A673 (cell line): ENCODE measurements at regions of chr3 and their contacts with region 1.

Region 1: DNA sequence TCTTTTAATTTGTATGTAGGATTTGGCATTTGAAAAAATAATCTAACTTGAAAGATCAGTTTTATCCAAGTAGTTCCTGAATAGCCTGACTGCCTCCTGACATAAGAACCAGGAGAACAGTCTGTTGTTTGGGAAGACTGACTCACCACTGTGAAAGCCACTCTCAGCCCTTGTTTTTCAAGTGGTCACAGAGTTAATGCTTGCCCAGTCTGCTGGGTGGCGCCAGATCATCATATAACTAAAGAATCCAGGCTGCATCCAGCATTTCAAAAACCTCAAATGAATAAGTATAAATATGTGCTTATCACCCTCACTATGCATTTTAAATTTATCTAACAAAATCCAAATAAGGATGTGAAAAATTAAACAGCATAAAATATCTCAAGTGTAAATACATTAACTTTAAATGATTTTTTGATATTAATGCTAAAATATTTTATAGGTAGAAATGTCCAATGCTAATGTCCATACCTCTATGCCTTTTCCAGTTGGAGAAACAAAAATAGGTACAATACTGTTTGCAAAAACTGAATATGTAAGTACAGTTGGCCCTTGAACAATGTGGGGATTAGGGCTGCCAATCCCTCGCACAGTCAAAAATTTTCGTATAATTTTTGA is 26.9 kb upstream of the ZBBX start:
- DNase-seq: peak; percentile 64
- H3K4me3 ChIP-seq: no peak overlapping the region
- H3K27ac ChIP-seq: no peak overlapping the region
- H3K4me1 ChIP-seq: no peaks in the 10 kb centered on the region
- H3K27me3 ChIP-seq: no peaks in the 10 kb centered on the region
- CTCF ChIP-seq: peak; percentile 65

Region 2: DNA sequence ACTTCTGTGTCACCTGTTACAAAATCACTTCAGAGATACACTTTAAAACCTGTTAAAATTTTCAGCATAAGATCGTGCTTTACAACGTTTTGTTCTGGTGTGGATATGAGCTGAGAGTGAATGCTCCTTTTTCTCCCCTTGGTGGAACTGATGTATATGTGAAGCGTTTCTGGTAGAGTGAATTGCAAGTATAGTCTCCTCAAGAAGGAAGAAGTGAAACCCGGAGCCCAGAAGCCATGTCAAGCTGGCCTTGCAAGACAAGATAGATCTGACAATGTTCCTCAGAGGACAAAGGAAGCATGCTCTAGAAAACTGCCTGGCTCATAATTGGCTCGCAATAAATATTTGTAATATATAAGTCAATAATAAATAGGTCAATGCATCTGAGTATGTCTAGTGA is 43.2 kb after region 1 on chr3:
- CTCF ChIA-PET with region 1: no interaction called
- POLR2A ChIA-PET with region 1: no interaction called
- intact Hi-C with region 1: no loop called
- DNase-seq: no peak
- H3K4me3 ChIP-seq: no peak overlapping the region
- H3K27ac ChIP-seq: no peak overlapping the region
- H3K4me1 ChIP-seq: no peaks in the 10 kb centered on the region
- H3K27me3 ChIP-seq: no peaks in the 10 kb centered on the region
- CTCF ChIP-seq: no peak

Region 3: DNA sequence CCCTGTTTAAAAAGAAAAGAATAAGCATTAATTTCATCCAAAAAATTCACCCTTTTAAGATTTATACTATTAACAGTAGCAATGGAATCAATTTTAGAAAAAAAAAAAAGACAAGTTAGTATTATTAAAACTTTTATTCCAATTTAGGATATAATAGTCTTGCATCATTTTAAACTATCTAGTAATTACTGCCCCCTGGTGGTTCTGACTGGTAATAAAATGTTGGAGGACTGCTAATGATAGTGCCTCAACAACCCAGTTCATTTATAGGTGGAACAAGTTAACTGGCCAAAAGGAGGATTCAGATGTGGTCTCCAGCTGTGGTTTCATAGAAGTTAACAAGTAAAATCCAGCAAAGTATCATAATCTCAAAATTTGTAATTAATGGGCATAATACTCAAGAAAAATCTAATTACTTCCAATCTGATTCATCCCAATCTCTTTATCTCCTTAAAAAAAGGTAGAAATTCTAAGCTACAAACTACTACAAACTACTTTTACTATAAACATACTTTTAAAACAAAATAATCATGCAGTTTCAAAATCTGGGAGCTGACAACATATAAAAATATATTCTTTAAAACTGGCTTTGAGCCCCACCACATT is 277.5 kb after region 1 on chr3:
- CTCF ChIA-PET with region 1: no interaction called
- POLR2A ChIA-PET with region 1: no interaction called
- intact Hi-C with region 1: loop called (anchors 5 kb)
- DNase-seq: peak; percentile 77
- H3K4me3 ChIP-seq: no peak overlapping the region
- H3K27ac ChIP-seq: no peak overlapping the region
- H3K4me1 ChIP-seq: no peaks in the 10 kb centered on the region
- H3K27me3 ChIP-seq: no peaks in the 10 kb centered on the region
- CTCF ChIP-seq: peak; percentile 81

Region 4: DNA sequence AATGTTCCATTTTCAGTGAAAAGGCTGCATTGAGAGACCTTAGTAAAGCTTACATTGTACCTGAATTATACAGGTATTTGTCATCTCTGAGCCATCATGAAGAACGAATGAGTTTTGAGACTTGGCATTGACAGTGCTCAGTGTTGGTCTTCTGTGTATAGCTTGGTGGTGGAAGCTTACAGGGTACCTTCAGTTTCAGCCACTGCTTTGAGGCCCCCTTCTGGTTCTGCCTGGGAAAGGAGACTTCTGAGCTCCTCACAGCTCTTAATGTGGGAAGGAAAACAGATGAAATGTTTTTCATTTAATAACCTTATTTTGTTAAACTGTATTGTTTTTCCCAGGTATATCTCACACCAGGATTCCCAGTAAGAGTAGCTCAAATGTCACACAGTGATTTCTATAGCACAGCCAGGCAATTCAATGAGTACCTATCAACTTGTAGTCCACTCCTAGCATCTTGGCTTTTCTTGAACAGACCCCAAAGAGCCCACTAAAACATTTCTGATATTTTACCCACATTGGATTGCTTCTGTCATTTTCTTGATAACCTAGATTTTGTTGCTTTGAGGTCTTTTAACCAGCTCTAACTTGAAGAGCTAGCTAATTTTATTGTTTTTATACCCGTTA is 334.1 kb after region 1 on chr3:
- CTCF ChIA-PET with region 1: no interaction called
- POLR2A ChIA-PET with region 1: no interaction called
- intact Hi-C with region 1: loop called (anchors 5 kb)
- DNase-seq: peak; percentile 47
- H3K4me3 ChIP-seq: no peak overlapping the region
- H3K27ac ChIP-seq: no peak overlapping the region
- H3K4me1 ChIP-seq: no peaks in the 10 kb centered on the region
- H3K27me3 ChIP-seq: peaks cover 13% of the 10 kb centered on the region
- CTCF ChIP-seq: peak; percentile 55

Region 5: GRCh38 chr3:167830007-167830406 is 423.0 kb after region 1 on chr3:
- CTCF ChIA-PET with region 1: no interaction called
- POLR2A ChIA-PET with region 1: no interaction called
- intact Hi-C with region 1: no loop called
- DNase-seq: no peak
- H3K4me3 ChIP-seq: no peak overlapping the region
- H3K27ac ChIP-seq: no peak overlapping the region
- H3K4me1 ChIP-seq: no peaks in the 10 kb centered on the region
- H3K27me3 ChIP-seq: peaks cover 5% of the 10 kb centered on the region
- CTCF ChIP-seq: no peak

Region 6: GRCh38 chr3:168040607-168041208 is 633.7 kb after region 1 on chr3:
- CTCF ChIA-PET with region 1: no interaction called
- POLR2A ChIA-PET with region 1: no interaction called
- intact Hi-C with region 1: loop called (anchors 5 kb)
- DNase-seq: peak; percentile 74
- H3K4me3 ChIP-seq: no peak overlapping the region
- H3K27ac ChIP-seq: no peak overlapping the region
- H3K4me1 ChIP-seq: no peaks in the 10 kb centered on the region
- H3K27me3 ChIP-seq: no peaks in the 10 kb centered on the region
- CTCF ChIP-seq: peak; percentile 78

Region 7: DNA sequence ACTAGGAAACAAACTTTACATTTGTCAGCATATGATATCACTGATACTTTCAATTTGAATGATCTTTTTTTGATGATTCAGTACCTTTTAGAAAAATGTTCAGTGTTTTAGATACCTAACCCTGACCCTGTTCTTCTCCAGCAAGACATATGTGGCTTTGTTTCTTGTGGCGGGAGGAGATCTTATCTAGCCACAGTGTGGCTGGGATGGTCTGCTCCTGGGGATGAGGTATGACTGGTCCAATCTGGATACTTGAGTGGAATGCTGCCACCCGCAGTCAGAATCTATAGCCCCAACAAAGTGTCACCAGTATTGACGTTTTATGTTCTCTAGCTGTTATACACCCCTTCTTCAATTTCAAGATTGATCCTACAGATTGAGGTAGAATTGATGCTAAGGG is 1127.8 kb after region 1 on chr3:
- CTCF ChIA-PET with region 1: no interaction called
- POLR2A ChIA-PET with region 1: no interaction called
- intact Hi-C with region 1: no loop called
- DNase-seq: no peak
- H3K4me3 ChIP-seq: no peak overlapping the region
- H3K27ac ChIP-seq: no peak overlapping the region
- H3K4me1 ChIP-seq: no peaks in the 10 kb centered on the region
- H3K27me3 ChIP-seq: peaks cover 22% of the 10 kb centered on the region
- CTCF ChIP-seq: no peak